ENCODE measurements at regions of chr3 and their contacts with region 1.

Region 1: DNA sequence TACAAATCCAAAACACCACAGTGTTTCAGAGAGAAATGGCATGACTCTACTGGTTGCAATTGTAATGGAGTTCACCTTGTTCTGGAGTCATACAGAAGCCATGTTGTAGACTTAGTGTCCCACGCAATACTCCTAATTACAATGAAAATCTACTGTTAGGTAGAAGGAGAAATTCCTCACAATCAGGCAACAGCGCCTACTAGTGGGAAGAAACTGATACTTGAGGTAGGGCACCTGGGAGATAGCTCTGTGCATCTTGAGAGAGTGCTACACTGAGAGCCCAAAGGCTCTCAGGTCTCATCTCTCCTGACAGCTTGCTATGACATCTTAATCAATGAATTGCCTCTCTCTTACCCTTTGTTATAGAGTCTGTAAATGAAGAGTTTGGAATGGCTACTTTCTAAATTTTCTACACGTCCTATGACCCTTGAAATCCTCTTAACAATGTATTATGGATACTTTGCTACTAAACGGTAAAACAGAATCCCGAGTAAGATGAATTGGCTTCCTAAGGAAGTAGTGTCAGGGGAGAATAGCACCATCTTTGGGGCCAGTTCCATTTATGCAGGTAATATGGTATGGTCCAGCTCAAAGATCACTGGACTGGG is 422.7 kb upstream of the TPRG1 start:
- DNase-seq: peak; percentile 66
- H3K4me3 Mint-ChIP-seq: no peak overlapping the region
- H3K27ac Mint-ChIP-seq: no peak overlapping the region
- H3K4me1 Mint-ChIP-seq: peaks cover 29% of the 10 kb centered on the region
- H3K27me3 Mint-ChIP-seq: no peaks in the 10 kb centered on the region

Region 2: GRCh38 chr3:187974871-187975271 is 774.2 kb before region 1 on chr3:
- CTCF ChIA-PET with region 1: no interaction called
- intact Hi-C with region 1: loop called (anchors 5 kb)
- DNase-seq: no peak
- H3K4me3 Mint-ChIP-seq: peak overlapping the region; percentile 50
- H3K27ac Mint-ChIP-seq: peak overlapping the region; percentile 82
- H3K4me1 Mint-ChIP-seq: peaks cover 50% of the 10 kb centered on the region
- H3K27me3 Mint-ChIP-seq: no peaks in the 10 kb centered on the region

Region 3: DNA sequence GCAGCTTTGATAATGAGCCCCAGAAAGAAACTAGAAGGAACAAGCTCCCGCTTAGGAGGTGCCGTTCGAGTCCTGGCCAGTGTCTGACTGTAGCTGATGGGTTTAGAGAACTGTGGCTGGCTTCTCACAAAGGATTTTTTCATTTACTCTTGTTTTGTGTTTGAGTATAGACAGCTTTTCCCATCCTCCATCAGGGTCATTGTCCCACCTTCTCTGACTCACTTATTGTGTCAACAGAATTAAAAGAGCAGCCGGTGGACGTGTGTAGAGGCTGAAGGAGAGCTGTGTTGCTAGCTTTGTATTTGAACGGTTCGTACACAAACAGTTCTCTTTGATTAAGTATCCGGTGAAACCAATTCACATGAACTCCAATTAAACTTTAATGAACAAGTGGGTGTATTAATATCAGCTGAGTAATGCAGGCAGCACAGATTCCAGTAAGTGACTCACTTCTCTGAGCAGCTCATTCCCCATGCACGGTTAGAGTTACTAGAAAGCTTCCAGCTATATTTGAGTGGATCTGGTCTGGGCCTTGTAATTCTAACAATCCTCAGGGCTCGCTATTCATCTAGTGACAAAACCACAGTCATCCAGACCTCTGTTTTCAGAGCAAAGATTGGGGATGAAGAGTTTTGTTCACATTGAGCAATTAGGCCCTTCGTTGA is 454.2 kb before region 1 on chr3:
- CTCF ChIA-PET with region 1: no interaction called
- intact Hi-C with region 1: loop called (anchors 5 kb)
- DNase-seq: peak; percentile 49
- H3K4me3 Mint-ChIP-seq: no peak overlapping the region
- H3K27ac Mint-ChIP-seq: peak overlapping the region; percentile 69
- H3K4me1 Mint-ChIP-seq: peaks cover 85% of the 10 kb centered on the region
- H3K27me3 Mint-ChIP-seq: no peaks in the 10 kb centered on the region

Region 4: GRCh38 chr3:188400494-188401243 is 348.4 kb before region 1 on chr3:
- CTCF ChIA-PET with region 1: interaction called, 3 read pairs
- intact Hi-C with region 1: loop called (anchors 5 kb)
- DNase-seq: peak; percentile 60
- H3K4me3 Mint-ChIP-seq: no peak overlapping the region
- H3K27ac Mint-ChIP-seq: peak overlapping the region; percentile 43
- H3K4me1 Mint-ChIP-seq: peaks cover 70% of the 10 kb centered on the region
- H3K27me3 Mint-ChIP-seq: no peaks in the 10 kb centered on the region

Region 5: GRCh38 chr3:188683032-188683521 is 66.0 kb before region 1 on chr3:
- CTCF ChIA-PET with region 1: no interaction called
- intact Hi-C with region 1: loop called (anchors 1 kb)
- DNase-seq: peak; percentile 51
- H3K4me3 Mint-ChIP-seq: no peak overlapping the region
- H3K27ac Mint-ChIP-seq: peak overlapping the region; percentile 37
- H3K4me1 Mint-ChIP-seq: peaks cover 32% of the 10 kb centered on the region
- H3K27me3 Mint-ChIP-seq: no peaks in the 10 kb centered on the region

Region 6: DNA sequence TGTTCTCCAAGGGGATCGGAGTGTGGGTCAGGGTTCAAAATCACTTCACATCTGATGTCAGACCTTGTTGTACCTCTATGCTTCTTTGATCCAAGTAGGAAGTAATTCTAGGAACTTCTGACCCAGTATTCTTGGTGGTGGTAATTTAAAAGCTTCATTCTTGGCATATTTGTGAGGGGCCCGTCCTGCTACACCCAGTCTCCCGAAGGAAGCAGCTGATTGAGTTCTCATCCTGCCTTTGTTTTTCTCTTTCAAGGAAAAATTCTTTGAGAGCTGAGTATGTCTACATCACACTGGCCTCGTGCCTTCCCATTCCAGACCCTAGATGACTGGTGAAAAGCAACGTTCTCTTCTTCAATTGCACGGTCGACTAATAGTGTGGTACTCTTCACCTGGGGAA is 188.3 kb after region 1 on chr3:
- CTCF ChIA-PET with region 1: no interaction called
- intact Hi-C with region 1: no loop called
- DNase-seq: no peak
- H3K4me3 Mint-ChIP-seq: no peak overlapping the region
- H3K27ac Mint-ChIP-seq: no peak overlapping the region
- H3K4me1 Mint-ChIP-seq: no peaks in the 10 kb centered on the region
- H3K27me3 Mint-ChIP-seq: peaks cover 3% of the 10 kb centered on the region

Region 7: GRCh38 chr3:188947401-188948280 is 198.5 kb after region 1 on chr3:
- CTCF ChIA-PET with region 1: interaction called, 3 read pairs
- intact Hi-C with region 1: loop called (anchors 2 kb)
- DNase-seq: peak; percentile 61
- H3K4me3 Mint-ChIP-seq: no peak overlapping the region
- H3K27ac Mint-ChIP-seq: no peak overlapping the region
- H3K4me1 Mint-ChIP-seq: peaks cover 35% of the 10 kb centered on the region
- H3K27me3 Mint-ChIP-seq: peaks cover 18% of the 10 kb centered on the region

Region 8: GRCh38 chr3:189132231-189132707 is 383.2 kb after region 1 on chr3:
- CTCF ChIA-PET with region 1: no interaction called
- intact Hi-C with region 1: loop called (anchors 1 kb)
- DNase-seq: peak; percentile 91
- H3K4me3 Mint-ChIP-seq: peak overlapping the region; percentile 41
- H3K27ac Mint-ChIP-seq: peak overlapping the region; percentile 76
- H3K4me1 Mint-ChIP-seq: peaks cover 21% of the 10 kb centered on the region
- H3K27me3 Mint-ChIP-seq: no peaks in the 10 kb centered on the region

Region 9: GRCh38 chr3:189430166-189430947 is 681.2 kb after region 1 on chr3:
- CTCF ChIA-PET with region 1: no interaction called
- intact Hi-C with region 1: no loop called
- DNase-seq: no peak
- H3K4me3 Mint-ChIP-seq: no peak overlapping the region
- H3K27ac Mint-ChIP-seq: no peak overlapping the region
- H3K4me1 Mint-ChIP-seq: no peaks in the 10 kb centered on the region
- H3K27me3 Mint-ChIP-seq: no peaks in the 10 kb centered on the region